Activated CD4-positive, alpha-beta T cell treated with anti-CD3 and anti-CD28 coated beads, Interleukin-2, amount 10 ng/mL, durations not matched to agents 7 days and 5 days (primary cell): ENCODE measurements at regions of chr2 and their contacts with region 1.

Region 1: DNA sequence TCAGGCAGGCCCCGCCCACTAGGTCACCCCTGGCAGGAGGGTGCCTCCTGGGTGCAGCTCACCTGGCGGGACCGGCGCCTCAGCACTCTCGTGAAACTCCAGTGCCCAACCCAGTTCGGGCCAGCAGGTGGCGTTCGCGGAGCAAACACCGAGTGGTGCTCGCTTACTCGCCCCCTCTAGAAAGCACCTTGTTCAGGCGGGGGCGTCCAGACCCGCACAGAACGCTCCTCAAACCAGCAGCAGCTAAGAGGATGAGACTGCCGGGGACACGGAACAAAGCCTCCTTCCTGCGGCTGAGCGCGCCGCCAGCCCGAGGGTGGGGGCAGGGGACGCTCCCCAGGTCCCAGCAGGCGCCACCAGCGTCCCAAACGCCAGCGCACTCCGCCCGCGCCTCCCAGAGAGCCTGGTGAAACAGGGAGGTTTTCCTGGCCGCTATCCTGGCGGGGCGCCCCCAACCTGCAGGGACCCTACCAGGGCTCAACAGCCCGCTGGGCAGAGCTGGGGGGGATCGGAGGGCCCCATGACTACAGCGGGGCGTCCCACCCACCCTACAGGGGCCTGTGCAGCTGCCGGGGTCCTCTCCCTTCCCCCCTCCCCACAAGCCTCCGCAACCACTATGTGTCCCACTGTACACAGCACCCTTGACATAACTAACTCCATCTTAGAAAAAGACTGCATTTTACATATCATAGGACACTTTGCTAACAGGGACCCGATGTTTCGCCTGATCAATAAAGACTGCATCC is 44.7 kb downstream of the MRPS5 start:
- DNase-seq: peak; percentile 94
- H3K4me3 Mint-ChIP-seq: peak overlapping the region; percentile 88
- H3K27ac Mint-ChIP-seq: peak overlapping the region; percentile 98
- H3K4me1 Mint-ChIP-seq: peaks cover 80% of the 10 kb centered on the region
- H3K27me3 Mint-ChIP-seq: no peaks in the 10 kb centered on the region

Region 2: GRCh38 chr2:95034221-95034620 is 42.7 kb before region 1 on chr2:
- CTCF ChIA-PET with region 1: interaction called, 13 read pairs
- POLR2A ChIA-PET with region 1: no interaction called
- DNase-seq: no peak
- H3K4me3 Mint-ChIP-seq: no peak overlapping the region
- H3K27ac Mint-ChIP-seq: peak overlapping the region; percentile 43
- H3K4me1 Mint-ChIP-seq: peaks cover 75% of the 10 kb centered on the region
- H3K27me3 Mint-ChIP-seq: no peaks in the 10 kb centered on the region

Region 3: DNA sequence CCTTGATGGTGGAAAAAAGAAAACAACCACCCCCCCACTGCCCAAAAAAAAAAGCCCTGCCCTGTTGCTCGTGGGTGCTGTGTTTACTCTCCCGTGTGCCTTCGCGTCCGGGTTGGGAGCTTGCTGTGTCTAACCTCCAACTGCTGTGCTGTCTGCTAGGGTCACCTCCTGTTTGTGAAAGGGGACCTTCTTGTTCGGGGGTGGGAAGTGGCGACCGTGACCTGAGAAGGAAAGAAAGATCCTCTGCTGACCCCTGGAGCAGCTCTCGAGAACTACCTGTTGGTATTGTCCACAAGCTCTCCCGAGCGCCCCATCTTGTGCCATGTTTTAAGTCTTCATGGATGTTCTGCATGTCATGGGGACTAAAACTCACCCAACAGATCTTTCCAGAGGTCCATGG is 23.4 kb before region 1 on chr2:
- CTCF ChIA-PET with region 1: interaction called, 13 read pairs
- POLR2A ChIA-PET with region 1: no interaction called
- DNase-seq: no peak
- H3K4me3 Mint-ChIP-seq: no peak overlapping the region
- H3K27ac Mint-ChIP-seq: peak overlapping the region; percentile 83
- H3K4me1 Mint-ChIP-seq: peaks cover 78% of the 10 kb centered on the region
- H3K27me3 Mint-ChIP-seq: no peaks in the 10 kb centered on the region

Region 4: DNA sequence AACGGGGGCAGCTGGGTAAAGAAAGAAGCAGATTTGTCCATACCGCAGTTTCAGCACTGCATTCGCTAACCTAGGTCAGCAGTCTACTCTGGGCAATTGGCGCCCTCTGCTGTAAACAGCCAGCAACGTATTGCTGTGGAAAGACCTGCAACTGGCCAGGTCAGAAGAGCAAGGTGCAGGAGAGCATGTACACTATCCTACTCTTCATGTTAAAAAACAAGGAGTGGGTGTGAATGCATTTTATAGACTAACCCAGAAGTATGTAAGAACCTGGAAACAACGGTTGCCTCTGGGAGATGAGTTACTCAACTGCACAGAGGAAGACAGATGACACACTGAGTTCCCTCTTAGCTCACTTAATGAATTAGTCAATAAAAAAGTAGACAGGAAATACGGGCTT is 38.5 kb after region 1 on chr2:
- CTCF ChIA-PET with region 1: interaction called, 58 read pairs
- POLR2A ChIA-PET with region 1: no interaction called
- DNase-seq: peak; percentile 86
- H3K4me3 Mint-ChIP-seq: no peak overlapping the region
- H3K27ac Mint-ChIP-seq: no peak overlapping the region
- H3K4me1 Mint-ChIP-seq: peaks cover 45% of the 10 kb centered on the region
- H3K27me3 Mint-ChIP-seq: no peaks in the 10 kb centered on the region